ENCODE measurements at regions of chr22 and their contacts with region 1.

Region 1: DNA sequence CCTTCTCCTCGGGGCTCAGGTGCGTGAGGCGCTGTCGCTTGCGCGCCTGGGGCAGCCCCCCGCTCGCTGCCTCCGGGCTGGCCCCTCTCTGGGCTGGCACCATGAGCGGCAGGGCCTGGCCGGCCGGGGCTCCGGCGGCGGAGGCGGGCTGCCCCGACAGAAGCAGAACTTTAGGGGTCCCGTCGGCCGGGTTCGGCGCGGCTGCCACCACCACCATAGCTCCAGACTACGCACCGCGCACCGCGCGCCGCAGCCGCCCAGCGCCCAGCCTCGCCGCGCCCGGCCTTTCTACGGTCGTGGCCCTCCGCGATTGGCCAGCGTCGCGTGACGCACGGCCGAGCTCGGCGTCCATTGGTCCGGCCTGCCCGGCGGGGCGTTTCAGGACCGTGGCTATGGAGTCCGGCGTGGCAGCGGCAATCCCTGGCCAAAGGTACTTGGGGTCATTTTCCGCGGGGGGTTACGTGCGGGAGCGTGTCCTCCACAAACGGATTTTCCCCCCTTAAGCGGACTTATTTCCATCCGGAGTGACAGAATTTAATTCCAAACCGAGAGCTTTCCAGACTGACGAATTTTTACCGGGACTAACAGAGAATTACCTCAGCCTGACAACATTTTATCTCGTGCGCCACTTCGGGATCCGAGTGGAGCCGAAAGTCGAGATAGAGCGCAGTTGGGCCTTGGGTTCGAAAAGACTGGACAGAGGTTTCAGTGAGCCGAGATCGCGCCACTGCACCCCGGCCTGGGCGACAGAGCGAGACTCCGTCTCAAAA is at the start of gene XBP1:
- DNase-seq: peak; percentile 63
- ATAC-seq: peak; percentile 92
- H3K4me3 ChIP-seq: peak within 1 kb of the TSS; percentile 83
- H3K27ac ChIP-seq: peak within 1 kb of the TSS; percentile 95
- H3K4me1 ChIP-seq: peaks cover 12% of the 10 kb centered on the region
- H3K27me3 ChIP-seq: no peaks in the 10 kb centered on the region
- CTCF ChIP-seq: no peak
- EP300 ChIP-seq: no peak
- POLR2A ChIP-seq: peak; percentile 98
- RAD21 ChIP-seq: no peak
- polyA plus RNA-seq, gene XBP1: 44.5 to 67.3 TPM

Region 2: DNA sequence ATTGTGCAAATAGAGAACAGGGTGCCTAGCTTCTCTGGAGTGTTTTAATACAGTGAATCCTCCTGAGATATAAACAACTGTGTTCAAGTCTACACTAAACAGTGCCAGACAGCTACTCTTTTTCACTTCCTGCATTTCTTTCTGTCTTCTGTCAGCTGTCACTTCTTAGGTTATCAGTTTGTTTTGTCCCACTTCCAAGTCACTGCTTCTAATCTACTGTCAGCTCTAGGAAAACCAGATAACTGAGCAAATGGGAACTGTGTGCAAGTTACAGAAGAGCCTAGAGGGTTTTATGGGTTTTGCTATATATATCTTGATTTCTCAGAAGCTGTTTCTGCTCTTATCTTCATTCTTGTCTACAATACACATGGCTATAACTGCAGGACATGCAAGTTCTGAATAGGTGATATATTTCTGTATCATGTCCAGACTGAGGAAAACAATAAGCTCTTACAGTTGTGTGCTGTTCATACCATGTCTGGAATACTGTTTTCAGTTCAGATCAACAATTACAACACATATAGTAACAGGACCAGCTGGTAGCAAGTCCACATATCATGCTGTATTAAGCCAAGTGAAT is 887.2 kb before region 1 on chr22:
- CTCF ChIA-PET with region 1: no interaction called
- POLR2A ChIA-PET with region 1: interaction called, 12 read pairs
- RAD21 ChIA-PET with region 1: no interaction called
- SMC1A ChIA-PET with region 1: no interaction called
- in situ Hi-C with region 1: no loop called
- intact Hi-C with region 1: no loop called
- DNase-seq: no peak
- ATAC-seq: peak; percentile 71
- H3K4me3 ChIP-seq: no peak overlapping the region
- H3K27ac ChIP-seq: no peak overlapping the region
- H3K4me1 ChIP-seq: peaks cover 9% of the 10 kb centered on the region; the same call in 1 of the 2 replicates
- H3K27me3 ChIP-seq: no peaks in the 10 kb centered on the region
- CTCF ChIP-seq: no peak
- EP300 ChIP-seq: no peak
- POLR2A ChIP-seq: no peak
- RAD21 ChIP-seq: no peak

Region 3: DNA sequence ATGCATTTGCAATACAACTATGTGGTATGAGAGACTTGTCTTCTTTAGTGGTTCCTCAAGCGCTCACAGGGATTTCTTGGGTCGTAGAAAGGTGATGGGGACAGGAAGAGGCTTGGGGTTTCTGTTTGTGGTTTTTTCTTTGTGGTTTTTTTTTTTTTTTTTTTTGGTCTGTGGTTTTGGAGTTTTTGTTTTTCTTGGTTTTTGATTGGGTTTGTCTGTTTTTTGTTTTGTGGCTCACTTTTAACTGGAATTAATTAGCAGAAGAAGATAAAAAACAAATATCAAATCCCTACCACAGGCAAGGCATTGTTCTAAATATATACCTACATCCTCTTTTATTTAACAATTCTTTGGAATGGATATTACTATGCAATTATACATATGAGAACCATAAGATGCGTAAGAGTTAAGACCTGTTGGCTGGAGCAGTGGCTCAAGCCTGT is 126.4 kb before region 1 on chr22:
- CTCF ChIA-PET with region 1: no interaction called
- POLR2A ChIA-PET with region 1: no interaction called
- RAD21 ChIA-PET with region 1: no interaction called
- SMC1A ChIA-PET with region 1: no interaction called
- in situ Hi-C with region 1: no loop called
- intact Hi-C with region 1: loop called (anchors 10 kb)
- DNase-seq: peak; percentile 40
- ATAC-seq: peak; percentile 84
- H3K4me3 ChIP-seq: no peak overlapping the region
- H3K27ac ChIP-seq: no peak overlapping the region
- H3K4me1 ChIP-seq: peaks cover 3% of the 10 kb centered on the region
- H3K27me3 ChIP-seq: peaks cover under 1 to 6% of the 10 kb centered on the region in 2 experiments
- CTCF ChIP-seq: no peak
- EP300 ChIP-seq: peak in 1 of 2 experiments; percentile 66; a peak in 1 of 4 replicates
- POLR2A ChIP-seq: no peak
- RAD21 ChIP-seq: no peak

Region 4: GRCh38 chr22:28772633-28773460 is 27.6 kb before region 1 on chr22 and contains the start of gene CCDC117:
- CTCF ChIA-PET with region 1: interaction called, 4 read pairs
- POLR2A ChIA-PET with region 1: interaction called, 26 read pairs
- RAD21 ChIA-PET with region 1: interaction called, 9 read pairs
- SMC1A ChIA-PET with region 1: interaction called, 5 read pairs
- in situ Hi-C with region 1: no loop called
- intact Hi-C with region 1: no loop called
- DNase-seq: peak; percentile 84
- ATAC-seq: peak; percentile 93
- H3K4me3 ChIP-seq: peak within 1 kb of the TSS; percentile 96
- H3K27ac ChIP-seq: peak within 1 kb of the TSS; percentile 89
- H3K4me1 ChIP-seq: no peaks in the 10 kb centered on the region
- H3K27me3 ChIP-seq: no peaks in the 10 kb centered on the region
- CTCF ChIP-seq: peak in 2 of 3 experiments; percentile 12 to 19; a peak in 2 of 6 replicates
- EP300 ChIP-seq: peak; percentile 5 to 40; a peak in 1 of 4 replicates
- POLR2A ChIP-seq: peak; percentile 82
- RAD21 ChIP-seq: peak; percentile 13; the same call in 1 of the 2 replicates
- polyA plus RNA-seq, gene CCDC117: 6.3 to 8.3 TPM

Region 5: DNA sequence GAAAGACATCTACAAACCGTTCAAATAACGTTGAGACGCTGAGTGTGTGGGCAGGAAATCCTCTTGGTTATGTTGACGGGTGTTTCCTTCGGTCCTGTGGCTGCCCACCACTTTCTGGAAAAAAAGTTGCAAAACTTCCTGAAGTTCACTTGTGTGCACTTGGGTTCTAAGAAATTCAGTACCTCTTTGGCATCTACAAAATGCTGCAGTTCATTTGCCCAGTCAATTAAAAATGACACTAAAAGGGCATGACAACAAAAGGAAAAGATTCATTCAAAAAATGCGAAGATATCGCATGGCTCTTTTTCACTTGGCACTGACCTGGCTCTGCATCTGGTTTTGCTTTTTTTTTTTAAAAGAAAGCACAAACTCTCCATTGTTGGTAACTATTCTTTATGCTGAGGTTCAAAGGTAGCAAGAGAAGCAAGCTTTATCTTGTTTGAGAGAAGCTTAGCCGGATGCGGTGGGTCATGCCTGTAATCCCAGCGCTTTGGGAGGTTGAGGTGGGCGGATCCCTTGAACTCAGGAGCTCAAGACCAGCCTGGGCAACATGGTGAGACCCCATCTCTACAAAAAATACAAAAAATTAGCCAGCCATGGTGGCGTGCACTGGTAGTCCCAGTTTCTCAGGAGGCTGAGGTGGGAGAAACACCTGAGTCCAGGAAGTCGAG is 10.5 kb after region 1 on chr22:
- CTCF ChIA-PET with region 1: interaction called, 26 read pairs
- POLR2A ChIA-PET with region 1: interaction called, 78 read pairs
- RAD21 ChIA-PET with region 1: interaction called, 74 read pairs
- SMC1A ChIA-PET with region 1: interaction called, 49 read pairs
- in situ Hi-C with region 1: no loop called
- intact Hi-C with region 1: no loop called
- DNase-seq: no peak
- ATAC-seq: peak; percentile 34
- H3K4me3 ChIP-seq: no peak overlapping the region
- H3K27ac ChIP-seq: peak overlapping the region; percentile 51; the same call in 1 of the 2 replicates
- H3K4me1 ChIP-seq: peaks cover 21% of the 10 kb centered on the region
- H3K27me3 ChIP-seq: no peaks in the 10 kb centered on the region
- CTCF ChIP-seq: no peak
- EP300 ChIP-seq: no peak
- POLR2A ChIP-seq: no peak
- RAD21 ChIP-seq: no peak

Region 6: GRCh38 chr22:28817919-28818909 is 17.7 kb after region 1 on chr22:
- CTCF ChIA-PET with region 1: interaction called, 25 read pairs
- POLR2A ChIA-PET with region 1: interaction called, 78 read pairs
- RAD21 ChIA-PET with region 1: interaction called, 58 read pairs
- SMC1A ChIA-PET with region 1: interaction called, 130 read pairs
- in situ Hi-C with region 1: no loop called
- intact Hi-C with region 1: no loop called
- DNase-seq: no peak
- ATAC-seq: peak; percentile 50
- H3K4me3 ChIP-seq: 0 out of 2 replicates have a peak overlapping the region, but pooled peaks have one; percentile 8
- H3K27ac ChIP-seq: peak overlapping the region; percentile 49
- H3K4me1 ChIP-seq: peaks cover 42% of the 10 kb centered on the region
- H3K27me3 ChIP-seq: no peaks in the 10 kb centered on the region
- CTCF ChIP-seq: no peak
- EP300 ChIP-seq: no peak
- POLR2A ChIP-seq: no peak
- RAD21 ChIP-seq: no peak

Measured in GM12878 (cell line).